Pancreas (tissue), 10 donors: ENCODE measurements at regions of chr2 and their contacts with region 1.

Region 1: DNA sequence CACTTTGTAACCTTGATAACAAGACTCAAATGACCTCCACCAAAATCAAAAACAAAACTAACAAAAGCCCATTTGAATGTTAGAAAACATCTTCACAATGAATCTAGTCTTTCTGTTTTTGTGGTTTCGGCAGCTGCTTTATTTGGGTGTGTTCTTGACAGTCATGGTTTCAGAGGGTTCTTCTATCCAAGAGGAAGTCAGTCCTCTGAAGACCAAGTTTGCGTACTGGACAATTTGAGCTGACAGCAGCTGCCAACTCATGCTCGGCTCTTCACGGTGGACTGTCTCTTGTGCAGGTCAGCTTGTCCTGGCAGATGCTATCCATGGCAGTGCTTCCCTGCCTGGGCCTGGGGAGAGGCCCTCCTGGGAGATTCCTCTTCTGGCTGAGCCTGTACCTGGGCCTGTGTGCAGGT is 91.0 kb downstream of the TMEM17 start:
- DNase-seq: no peak
- ATAC-seq: no peak
- H3K4me3 ChIP-seq: no peak overlapping the region
- H3K27ac ChIP-seq: no peak overlapping the region
- H3K4me1 ChIP-seq: peaks cover 0 to 5% (median 0%) of the 10 kb centered on the region in 3 donors
- H3K27me3 ChIP-seq: no peaks in the 10 kb centered on the region
- CTCF ChIP-seq: no peak

Region 2: DNA sequence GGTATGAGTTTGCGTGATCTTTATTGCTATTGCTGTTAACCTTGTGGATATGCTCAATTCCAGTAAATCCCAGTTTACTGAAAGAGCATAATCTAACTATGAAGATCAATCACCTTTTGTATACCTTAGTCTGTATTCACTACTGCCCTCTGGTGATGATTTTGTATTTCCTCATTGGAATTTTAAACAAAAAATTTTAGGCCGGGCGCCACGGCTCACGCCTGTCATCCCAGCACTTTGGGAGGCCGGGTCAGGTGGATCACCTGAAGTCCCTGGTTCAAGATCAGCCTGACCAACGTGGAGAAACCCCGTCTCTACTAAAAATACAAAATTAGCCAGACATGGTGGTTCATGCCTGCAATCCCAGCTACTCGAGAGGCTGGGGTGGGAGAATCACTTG is 504.4 kb before region 1 on chr2:
- intact Hi-C with region 1: loop called in 1 of 3 experiments (anchors 5 kb)
- DNase-seq: no peak
- ATAC-seq: peak in 3 of 4 donors; percentile 26 to 45 (median 36)
- H3K4me3 ChIP-seq: no peak overlapping the region
- H3K27ac ChIP-seq: no peak overlapping the region
- H3K4me1 ChIP-seq: peaks cover 0 to 13% (median 7%) of the 10 kb centered on the region in 3 donors
- H3K27me3 ChIP-seq: no peaks in the 10 kb centered on the region
- CTCF ChIP-seq: peak in 1 of 4 donors; percentile 12

Region 3: DNA sequence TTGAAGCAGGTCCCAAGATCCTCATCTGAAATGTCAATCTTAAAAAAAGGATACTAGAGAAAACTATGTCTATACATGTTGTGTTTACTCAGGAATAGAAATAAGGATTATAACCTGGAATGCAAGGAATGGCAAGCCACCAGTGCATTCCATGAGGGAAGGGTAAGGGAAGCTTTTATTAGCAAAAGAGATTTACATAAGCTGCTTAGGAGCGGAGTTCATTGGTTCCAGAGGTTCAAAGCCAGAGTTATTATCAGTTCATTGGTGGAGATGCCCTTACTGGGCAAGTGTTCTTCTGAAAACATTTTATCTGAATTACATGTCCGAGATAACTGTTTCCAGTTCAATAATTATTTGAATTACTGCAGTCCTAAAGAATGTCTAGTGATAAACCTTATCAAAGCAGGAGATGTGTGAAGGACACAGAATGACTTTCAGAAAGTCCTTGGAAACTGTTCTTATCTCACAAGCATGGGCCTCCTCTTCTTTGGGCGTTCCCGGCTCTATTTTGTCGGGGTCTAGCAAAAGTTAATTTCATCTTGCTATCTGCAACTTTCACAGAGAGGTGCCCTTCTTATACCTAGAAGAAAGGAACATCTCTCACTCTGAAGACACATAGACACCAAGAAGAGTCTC is 486.1 kb before region 1 on chr2:
- intact Hi-C with region 1: loop called in 1 of 3 experiments (anchors 10 kb)
- DNase-seq: no peak
- ATAC-seq: peak in 1 of 4 donors; percentile 46
- H3K4me3 ChIP-seq: no peak overlapping the region
- H3K27ac ChIP-seq: no peak overlapping the region
- H3K4me1 ChIP-seq: no peaks in the 10 kb centered on the region
- H3K27me3 ChIP-seq: no peaks in the 10 kb centered on the region
- CTCF ChIP-seq: no peak

Region 4: GRCh38 chr2:61943251-61943650 is 471.8 kb before region 1 on chr2:
- intact Hi-C with region 1: no loop called
- DNase-seq: no peak
- ATAC-seq: no peak
- H3K4me3 ChIP-seq: no peak overlapping the region
- H3K27ac ChIP-seq: no peak overlapping the region
- H3K4me1 ChIP-seq: no peaks in the 10 kb centered on the region
- H3K27me3 ChIP-seq: no peaks in the 10 kb centered on the region
- CTCF ChIP-seq: no peak

Region 5: DNA sequence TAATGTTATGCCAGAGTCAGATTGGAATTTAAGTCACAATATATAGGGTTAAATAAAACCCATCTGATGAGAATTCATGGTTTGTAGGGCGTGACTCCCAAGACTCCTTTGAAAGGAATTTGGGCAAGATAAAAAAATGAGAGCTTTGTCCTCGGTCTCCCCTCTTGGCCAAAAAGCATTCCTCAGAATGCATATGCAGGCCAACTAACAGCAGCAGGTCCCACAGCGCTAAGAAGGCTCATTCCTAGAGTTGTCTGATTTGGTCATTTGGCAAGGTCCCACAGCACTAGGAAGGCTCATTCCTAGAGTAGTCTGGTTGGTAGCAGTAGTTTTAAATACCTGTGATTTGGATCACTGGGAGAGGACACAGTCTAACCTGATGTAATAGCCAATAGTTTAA is 325.4 kb before region 1 on chr2:
- intact Hi-C with region 1: no loop called
- DNase-seq: no peak
- ATAC-seq: no peak
- H3K4me3 ChIP-seq: no peak overlapping the region
- H3K27ac ChIP-seq: no peak overlapping the region
- H3K4me1 ChIP-seq: no peaks in the 10 kb centered on the region
- H3K27me3 ChIP-seq: no peaks in the 10 kb centered on the region
- CTCF ChIP-seq: no peak